ENCODE measurements at regions of chr3 and their contacts with region 1.

Region 1: DNA sequence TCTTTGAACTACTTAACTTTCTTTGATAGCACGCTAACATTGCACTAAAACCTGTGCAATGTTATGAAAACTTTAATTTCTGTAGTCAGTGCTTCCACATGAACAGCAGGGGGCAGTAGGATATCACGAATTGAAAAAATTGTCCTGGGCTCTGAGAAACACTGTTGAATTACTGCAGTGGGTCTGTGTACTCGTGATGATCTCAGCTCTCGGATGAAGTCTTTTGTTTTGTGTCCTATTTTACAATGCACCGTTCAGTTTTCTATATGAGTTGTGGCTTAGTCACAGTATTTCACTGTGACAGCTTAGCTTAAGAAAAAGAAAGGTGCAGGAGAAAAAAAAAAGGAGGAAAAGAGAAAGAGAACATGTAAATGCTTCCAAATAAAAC is 141.3 kb upstream of the CCDC54 start:
- DNase-seq: peak in 7 of 9 donors; percentile 43 to 78 (median 73)
- ATAC-seq: peak; percentile 84
- H3K4me3 ChIP-seq: peak overlapping the region; percentile 42
- H3K4me3 Mint-ChIP-seq: peak overlapping the region in 9 of 10 donors; percentile 40 to 80 (median 61)
- H3K27ac ChIP-seq: no peak overlapping the region
- H3K27ac Mint-ChIP-seq: peak overlapping the region in 1 of 9 donors; percentile 33
- H3K4me1 ChIP-seq: peaks cover 0 to 2% of the 10 kb centered on the region in 2 donors
- H3K4me1 Mint-ChIP-seq: peaks cover 2 to 17% (median 12%) of the 10 kb centered on the region in 7 donors
- H3K27me3 ChIP-seq: no peaks in the 10 kb centered on the region
- H3K27me3 Mint-ChIP-seq: peaks cover 0 to 35% (median 10%) of the 10 kb centered on the region in 5 donors

Region 2: DNA sequence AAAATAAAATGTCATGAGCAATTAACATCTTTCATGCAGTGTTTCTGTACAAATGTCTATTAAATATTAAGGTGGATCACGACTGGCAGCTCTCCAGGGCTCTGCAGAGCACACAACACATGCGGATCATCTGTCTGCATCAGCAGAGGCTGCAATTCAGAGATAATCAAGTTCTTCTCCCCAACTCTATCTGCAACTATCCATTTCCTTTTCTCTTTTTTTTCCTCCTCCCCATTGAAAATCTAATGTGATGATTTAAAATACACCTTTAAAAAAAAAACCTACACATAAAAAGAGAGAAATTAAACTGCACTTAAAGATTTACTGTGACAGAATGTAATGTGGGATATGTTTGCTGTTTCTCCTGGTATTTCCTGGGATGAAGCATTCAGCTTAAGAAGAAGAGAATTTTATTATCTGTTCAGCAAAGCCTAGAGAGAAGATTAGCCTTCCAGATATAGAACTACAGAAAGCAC is 211.3 kb before region 1 on chr3:
- CTCF ChIA-PET with region 1: no interaction called
- POLR2A ChIA-PET with region 1: no interaction called
- intact Hi-C with region 1: no loop called
- DNase-seq: no peak
- ATAC-seq: no peak
- H3K4me3 ChIP-seq: no peak overlapping the region
- H3K4me3 Mint-ChIP-seq: no peak overlapping the region
- H3K27ac ChIP-seq: no peak overlapping the region
- H3K27ac Mint-ChIP-seq: no peak overlapping the region
- H3K4me1 ChIP-seq: no peaks in the 10 kb centered on the region
- H3K4me1 Mint-ChIP-seq: no peaks in the 10 kb centered on the region
- H3K27me3 ChIP-seq: no peaks in the 10 kb centered on the region
- H3K27me3 Mint-ChIP-seq: peaks cover 0 to 5% (median 0%) of the 10 kb centered on the region in 5 donors

Region 3: GRCh38 chr3:107216711-107217110 is 19.2 kb before region 1 on chr3:
- CTCF ChIA-PET with region 1: no interaction called
- POLR2A ChIA-PET with region 1: no interaction called
- intact Hi-C with region 1: no loop called
- DNase-seq: no peak
- ATAC-seq: no peak
- H3K4me3 ChIP-seq: no peak overlapping the region
- H3K4me3 Mint-ChIP-seq: no peak overlapping the region
- H3K27ac ChIP-seq: no peak overlapping the region
- H3K27ac Mint-ChIP-seq: no peak overlapping the region
- H3K4me1 ChIP-seq: no peaks in the 10 kb centered on the region
- H3K4me1 Mint-ChIP-seq: peaks cover 0 to 3% (median 0%) of the 10 kb centered on the region in 7 donors
- H3K27me3 ChIP-seq: no peaks in the 10 kb centered on the region
- H3K27me3 Mint-ChIP-seq: peaks cover 0 to 28% (median 5%) of the 10 kb centered on the region in 5 donors

Region 4: DNA sequence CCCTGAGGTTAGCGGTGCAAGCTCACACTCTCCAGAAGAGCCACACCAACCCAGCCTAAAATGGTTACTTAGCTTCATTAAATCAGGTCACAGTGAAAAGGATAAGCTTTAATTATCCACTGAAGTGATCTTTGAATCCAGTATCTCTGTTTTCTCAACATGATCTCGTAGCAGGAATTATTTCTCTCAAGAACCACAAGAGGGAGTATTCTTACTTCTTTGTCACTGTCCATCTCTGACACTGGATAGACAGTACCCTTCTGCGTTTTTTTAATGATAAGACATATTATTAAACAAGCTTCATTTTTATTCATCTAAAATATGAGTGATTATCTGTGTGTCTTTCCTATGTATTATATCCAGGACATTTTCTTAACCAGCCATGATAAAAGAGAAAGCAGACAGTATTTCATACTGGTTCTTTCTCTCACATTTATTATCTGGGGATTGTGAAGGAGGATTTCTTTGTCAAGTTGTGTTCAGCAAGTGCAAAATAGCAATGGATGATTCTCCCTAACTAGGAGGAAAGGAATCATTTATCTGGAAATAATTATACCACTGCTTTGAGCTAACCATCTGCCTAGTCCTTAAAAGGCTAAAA is 36.0 kb after region 1 on chr3:
- CTCF ChIA-PET with region 1: interaction called, 5 read pairs
- POLR2A ChIA-PET with region 1: no interaction called
- intact Hi-C with region 1: loop called (anchors 1 to 2 kb)
- DNase-seq: peak in 6 of 9 donors; percentile 1 to 43 (median 20)
- ATAC-seq: peak; percentile 64
- H3K4me3 ChIP-seq: no peak overlapping the region
- H3K4me3 Mint-ChIP-seq: no peak overlapping the region
- H3K27ac ChIP-seq: no peak overlapping the region
- H3K27ac Mint-ChIP-seq: no peak overlapping the region
- H3K4me1 ChIP-seq: no peaks in the 10 kb centered on the region
- H3K4me1 Mint-ChIP-seq: peaks cover 0 to 2% (median 0%) of the 10 kb centered on the region in 7 donors
- H3K27me3 ChIP-seq: peaks cover 0 to 3% of the 10 kb centered on the region in 2 donors
- H3K27me3 Mint-ChIP-seq: peaks cover 6 to 42% (median 25%) of the 10 kb centered on the region in 5 donors

Region 5: GRCh38 chr3:107543666-107544065 is 307.7 kb after region 1 on chr3:
- CTCF ChIA-PET with region 1: interaction called, 3 read pairs
- POLR2A ChIA-PET with region 1: no interaction called
- intact Hi-C with region 1: loop called (anchors 1 to 2 kb)
- DNase-seq: no peak
- ATAC-seq: peak; percentile 36
- H3K4me3 ChIP-seq: no peak overlapping the region
- H3K4me3 Mint-ChIP-seq: no peak overlapping the region
- H3K27ac ChIP-seq: no peak overlapping the region
- H3K27ac Mint-ChIP-seq: no peak overlapping the region
- H3K4me1 ChIP-seq: peaks cover 0 to 3% of the 10 kb centered on the region in 2 donors
- H3K4me1 Mint-ChIP-seq: peaks cover 5 to 65% (median 51%) of the 10 kb centered on the region in 7 donors
- H3K27me3 ChIP-seq: no peaks in the 10 kb centered on the region
- H3K27me3 Mint-ChIP-seq: no peaks in the 10 kb centered on the region

Region 6: GRCh38 chr3:107740992-107741896 is 505.3 kb after region 1 on chr3:
- CTCF ChIA-PET with region 1: interaction called, 5 read pairs
- POLR2A ChIA-PET with region 1: no interaction called
- intact Hi-C with region 1: loop called (anchors 1 kb)
- DNase-seq: peak in 6 of 9 donors; percentile 3 to 42 (median 22)
- ATAC-seq: no peak
- H3K4me3 ChIP-seq: no peak overlapping the region
- H3K4me3 Mint-ChIP-seq: no peak overlapping the region
- H3K27ac ChIP-seq: no peak overlapping the region
- H3K27ac Mint-ChIP-seq: no peak overlapping the region
- H3K4me1 ChIP-seq: no peaks in the 10 kb centered on the region
- H3K4me1 Mint-ChIP-seq: peaks cover 0 to 12% (median 0%) of the 10 kb centered on the region in 7 donors
- H3K27me3 ChIP-seq: no peaks in the 10 kb centered on the region
- H3K27me3 Mint-ChIP-seq: no peaks in the 10 kb centered on the region

Region 7: DNA sequence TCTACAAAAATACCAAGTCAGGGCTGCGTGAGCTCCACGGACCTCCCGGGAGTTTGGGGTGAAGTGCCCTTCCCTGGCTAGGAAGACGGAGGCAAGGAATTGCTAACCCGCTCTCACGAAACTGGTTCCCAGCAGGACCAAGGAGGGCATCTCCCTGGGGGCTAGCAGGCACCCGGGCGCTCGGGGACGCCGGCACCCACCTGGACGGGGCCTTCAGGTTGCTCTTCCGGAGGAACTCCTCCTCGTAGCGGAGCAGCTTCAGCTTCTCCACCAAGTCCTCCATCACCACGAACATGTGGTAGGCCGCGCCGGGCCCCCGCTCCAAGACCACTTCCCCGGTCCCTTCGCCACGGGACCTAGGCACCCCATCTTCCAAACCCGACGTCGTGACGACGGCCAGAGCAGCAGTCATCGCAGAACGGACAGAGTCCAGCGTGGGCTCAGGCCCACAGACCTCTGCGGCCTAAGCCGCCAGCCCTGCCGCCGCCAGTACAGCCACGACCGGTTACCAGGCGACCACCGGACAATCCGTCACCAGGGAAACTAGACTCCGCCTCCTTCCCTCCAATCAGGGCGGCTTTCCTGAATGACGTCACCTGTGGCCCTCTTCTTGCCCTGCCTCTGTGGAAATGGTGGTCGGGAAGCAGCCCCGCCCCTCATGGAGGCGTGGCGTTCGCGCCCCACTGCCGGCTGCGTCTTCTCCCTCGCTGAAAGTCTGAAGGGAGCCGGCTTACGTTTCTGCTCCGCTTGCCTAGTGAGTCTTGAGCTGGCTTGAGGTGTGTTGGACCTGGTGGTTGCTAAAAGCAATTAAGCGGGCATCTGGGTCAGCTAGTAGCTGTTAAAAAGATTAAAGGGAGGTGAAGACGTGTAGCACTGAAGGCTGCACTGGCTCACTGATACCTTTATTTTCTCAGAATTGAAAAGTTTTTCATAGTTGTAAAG is 986.3 kb after region 1 on chr3 and contains the start of gene IFT57:
- CTCF ChIA-PET with region 1: interaction called, 3 read pairs
- POLR2A ChIA-PET with region 1: no interaction called
- intact Hi-C with region 1: loop called in 1 of 2 experiments (anchors 10 kb)
- DNase-seq: peak; percentile 89 to 97 (median 96)
- ATAC-seq: peak; percentile 97
- H3K4me3 ChIP-seq: peak within 1 kb of the TSS; percentile 59
- H3K4me3 Mint-ChIP-seq: peak within 1 kb of the TSS; percentile 93 to 99 (median 97)
- H3K27ac ChIP-seq: peak within 1 kb of the TSS; percentile 95
- H3K27ac Mint-ChIP-seq: peak within 1 kb of the TSS; percentile 95 to 100 (median 99)
- H3K4me1 ChIP-seq: peaks cover 21 to 24% of the 10 kb centered on the region in 2 donors
- H3K4me1 Mint-ChIP-seq: peaks cover 27 to 83% (median 62%) of the 10 kb centered on the region in 7 donors
- H3K27me3 ChIP-seq: no peaks in the 10 kb centered on the region
- H3K27me3 Mint-ChIP-seq: no peaks in the 10 kb centered on the region
- total RNA-seq, gene IFT57: 18.0 to 45.4 (median 26.4) TPM

Region 8: GRCh38 chr3:108552267-108553159 is 1316.6 kb after region 1 on chr3:
- CTCF ChIA-PET with region 1: no interaction called
- POLR2A ChIA-PET with region 1: no interaction called
- intact Hi-C with region 1: loop called (anchors 1 kb)
- DNase-seq: peak in 7 of 9 donors; percentile 4 to 40 (median 28)
- ATAC-seq: peak; percentile 66
- H3K4me3 ChIP-seq: no peak overlapping the region
- H3K4me3 Mint-ChIP-seq: no peak overlapping the region
- H3K27ac ChIP-seq: no peak overlapping the region
- H3K27ac Mint-ChIP-seq: no peak overlapping the region
- H3K4me1 ChIP-seq: no peaks in the 10 kb centered on the region
- H3K4me1 Mint-ChIP-seq: peaks cover 0 to 12% (median 0%) of the 10 kb centered on the region in 7 donors
- H3K27me3 ChIP-seq: no peaks in the 10 kb centered on the region
- H3K27me3 Mint-ChIP-seq: no peaks in the 10 kb centered on the region

Measured in naive thymus-derived CD4-positive, alpha-beta T cell (primary cell).